ENCODE measurements at regions of chr3 and their contacts with region 1.

Region 1: DNA sequence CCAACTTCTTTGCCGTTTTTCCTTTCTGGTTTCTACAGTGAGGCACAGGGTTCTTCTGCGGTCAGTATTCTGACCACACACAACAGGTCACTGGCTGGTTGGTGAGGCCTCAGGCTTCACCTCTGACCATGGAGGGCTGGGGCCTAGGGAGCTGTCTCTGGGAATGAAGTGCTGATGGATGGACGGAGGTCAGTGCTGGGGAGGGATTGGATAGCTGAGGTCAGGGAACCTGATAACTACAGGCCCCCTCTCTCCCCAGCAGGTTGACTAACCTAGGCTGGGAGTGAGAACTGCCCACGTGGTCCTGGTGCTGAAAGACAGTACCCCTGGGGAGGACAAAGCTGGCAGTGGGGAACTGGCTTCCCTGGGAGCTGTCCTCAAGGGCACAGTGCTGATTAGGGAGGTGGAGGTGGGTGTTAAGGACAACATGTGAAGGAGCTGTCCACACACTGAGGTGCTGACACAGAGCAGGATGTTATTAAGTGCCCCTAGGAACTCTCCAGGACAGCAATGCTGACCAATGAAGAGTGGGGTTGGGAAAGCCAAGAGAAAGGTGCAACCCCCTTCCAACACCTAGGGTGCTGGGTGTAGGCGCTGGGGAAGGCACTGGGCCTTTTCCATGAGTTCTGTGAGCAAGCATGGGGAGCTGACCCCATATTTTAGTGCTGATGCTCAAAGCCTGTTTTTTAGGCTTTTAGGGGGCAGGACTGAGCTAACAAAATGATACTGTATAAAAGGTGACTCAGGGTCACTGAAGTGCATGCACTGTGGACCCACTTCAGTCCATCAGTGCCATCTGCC is 45.2 kb downstream of the ATP2B2 start:
- DNase-seq: peak; percentile 82 to 92
- H3K4me3 ChIP-seq: no peak overlapping the region
- H3K27ac ChIP-seq: no peak overlapping the region
- H3K4me1 ChIP-seq: no peaks in the 10 kb centered on the region
- H3K27me3 ChIP-seq: no peaks in the 10 kb centered on the region
- CTCF ChIP-seq: peak in 1 of 3 experiments; percentile 2; a peak in 1 of 4 replicates
- EP300 ChIP-seq: no peak
- POLR2A ChIP-seq: no peak
- RAD21 ChIP-seq: peak; percentile 24 to 35; a peak in 2 of 4 replicates

Region 2: GRCh38 chr3:10474847-10475246 is 14.7 kb after region 1 on chr3:
- CTCF ChIA-PET with region 1: interaction called, 10 read pairs
- POLR2A ChIA-PET with region 1: no interaction called
- DNase-seq: no peak
- H3K4me3 ChIP-seq: no peak overlapping the region
- H3K27ac ChIP-seq: no peak overlapping the region
- H3K4me1 ChIP-seq: peaks cover 3 to 15% (median 8%) of the 10 kb centered on the region in 4 experiments
- H3K27me3 ChIP-seq: no peaks in the 10 kb centered on the region
- CTCF ChIP-seq: no peak
- EP300 ChIP-seq: no peak
- POLR2A ChIP-seq: no peak
- RAD21 ChIP-seq: no peak